Activated B cell treated with CpG ODN at 0.5 μM for 24 hours (primary cell): ENCODE measurements at regions of chr5 and their contacts with region 1.

Region 1: DNA sequence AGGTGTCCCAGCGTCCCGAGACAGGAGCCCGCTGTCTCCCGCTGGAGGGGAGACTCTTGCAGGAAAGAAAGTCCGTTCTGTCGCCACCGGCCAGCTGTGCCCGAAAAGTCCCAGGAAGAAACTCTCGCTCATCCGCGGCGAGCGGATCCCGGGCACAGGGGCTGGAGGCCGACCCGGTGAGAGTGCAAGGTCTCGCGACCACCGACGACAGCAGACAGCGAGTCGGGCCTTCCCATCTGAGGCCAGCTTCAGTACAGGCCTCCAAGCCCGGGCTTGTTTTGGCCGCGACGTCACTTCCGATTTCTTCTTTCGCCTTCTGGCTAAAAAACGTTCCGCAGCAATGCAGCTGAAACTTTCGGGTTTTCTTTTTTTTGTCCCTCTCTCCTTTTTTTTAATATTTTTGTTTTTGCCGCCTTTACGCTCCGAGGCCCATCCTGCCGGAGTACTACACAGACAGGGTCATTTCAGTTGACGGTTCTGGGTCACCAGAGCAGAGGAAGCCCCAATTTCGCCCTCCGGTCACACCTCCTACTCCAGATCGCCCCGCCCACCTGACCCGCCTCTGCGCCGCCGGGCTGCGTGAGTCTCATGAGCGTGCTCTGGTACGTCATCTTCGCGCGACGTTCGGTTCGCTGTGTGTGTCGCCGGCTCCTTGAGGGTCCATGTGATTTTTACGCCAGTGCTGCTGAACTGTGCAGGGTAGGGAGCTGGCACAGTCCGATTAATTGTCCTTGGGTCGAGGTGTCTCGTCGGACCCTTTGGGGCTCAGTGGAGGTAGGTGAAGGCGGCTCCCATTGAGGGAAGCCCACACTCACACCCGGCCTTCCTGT is at the starts of genes ANKRA2 and UTP15:
- DNase-seq: peak; percentile 98
- ATAC-seq: peak; percentile 96
- H3K4me3 Mint-ChIP-seq: peak within 1 kb of the TSS; percentile 99
- H3K27ac Mint-ChIP-seq: peak within 1 kb of the TSS; percentile 100
- H3K4me1 Mint-ChIP-seq: peaks cover 37% of the 10 kb centered on the region
- H3K27me3 Mint-ChIP-seq: no peaks in the 10 kb centered on the region
- CTCF ChIP-seq: no peak
- total RNA-seq, gene ANKRA2: 17.7 and 22.9 TPM in 2 replicates
- total RNA-seq, gene UTP15: 35.7 and 40.4 TPM in 2 replicates

Region 2: GRCh38 chr5:71586941-71587765 is 1978.2 kb before region 1 on chr5 and contains the start of gene MCCC2:
- CTCF ChIA-PET with region 1: no interaction called
- POLR2A ChIA-PET with region 1: no interaction called
- intact Hi-C with region 1: loop called (anchors 10 kb)
- DNase-seq: peak; percentile 93
- ATAC-seq: peak; percentile 98
- H3K4me3 Mint-ChIP-seq: peak within 1 kb of the TSS; percentile 97
- H3K27ac Mint-ChIP-seq: peak within 1 kb of the TSS; percentile 99
- H3K4me1 Mint-ChIP-seq: peaks cover 43% of the 10 kb centered on the region
- H3K27me3 Mint-ChIP-seq: no peaks in the 10 kb centered on the region
- CTCF ChIP-seq: no peak
- total RNA-seq, gene MCCC2: 68.5 and 70.4 TPM in 2 replicates

Region 3: GRCh38 chr5:72816311-72817145 is 748.8 kb before region 1 on chr5 and contains the start of gene TNPO1:
- CTCF ChIA-PET with region 1: no interaction called
- POLR2A ChIA-PET with region 1: no interaction called
- intact Hi-C with region 1: loop called (anchors 2 kb)
- DNase-seq: peak; percentile 94
- ATAC-seq: peak; percentile 79
- H3K4me3 Mint-ChIP-seq: peak within 1 kb of the TSS; percentile 95
- H3K27ac Mint-ChIP-seq: peak within 1 kb of the TSS; percentile 97
- H3K4me1 Mint-ChIP-seq: peaks cover 25% of the 10 kb centered on the region
- H3K27me3 Mint-ChIP-seq: peaks cover 5% of the 10 kb centered on the region
- CTCF ChIP-seq: no peak
- total RNA-seq, gene TNPO1: 89.6 and 109 TPM in 2 replicates

Region 4: DNA sequence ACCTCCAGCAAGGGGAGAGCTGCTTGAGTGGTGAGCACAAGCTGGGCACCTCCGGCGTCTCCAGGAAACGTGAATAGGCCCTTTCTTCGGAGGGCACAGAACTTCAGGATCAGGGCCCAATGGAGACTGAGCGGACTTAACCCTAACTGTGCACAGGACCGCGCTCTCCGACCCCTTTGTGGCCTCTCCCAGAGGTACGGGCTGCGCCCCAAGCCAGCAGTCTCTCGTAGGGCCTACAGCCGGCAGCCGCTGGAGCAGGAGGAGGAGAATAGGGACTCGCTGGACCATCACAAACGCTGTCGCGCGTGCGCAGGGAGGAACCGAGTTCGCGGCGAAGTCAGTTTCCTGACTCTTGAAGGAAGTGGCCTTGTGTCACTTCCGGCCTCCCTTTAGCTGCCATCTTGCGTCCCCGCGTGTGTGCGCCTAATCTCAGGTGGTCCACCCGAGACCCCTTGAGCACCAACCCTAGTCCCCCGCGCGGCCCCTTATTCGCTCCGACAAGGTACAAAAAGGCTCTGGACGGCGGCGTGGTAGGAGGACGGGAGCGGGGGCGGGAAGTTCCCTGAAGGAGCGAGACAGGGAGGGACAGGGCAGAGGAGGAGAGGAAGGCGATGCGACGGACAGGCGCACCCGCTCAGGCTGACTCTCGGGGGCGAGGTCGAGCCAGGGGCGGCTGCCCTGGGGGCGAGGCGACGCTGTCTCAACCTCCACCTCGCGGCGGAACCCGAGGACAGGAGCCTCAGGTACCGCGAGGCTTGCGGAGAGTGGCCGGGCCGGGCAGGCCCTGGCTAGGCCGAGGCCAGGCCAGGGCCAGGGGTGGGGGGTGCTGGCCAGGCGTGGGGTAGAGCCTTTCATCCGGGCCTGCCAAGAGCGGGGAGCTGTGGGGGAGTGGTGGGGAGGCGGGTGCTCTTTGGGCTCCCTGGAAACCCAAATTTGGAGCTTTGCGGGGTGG is 67.0 kb before region 1 on chr5 and contains the start of gene BTF3:
- CTCF ChIA-PET with region 1: no interaction called
- POLR2A ChIA-PET with region 1: interaction called, 35 read pairs
- intact Hi-C with region 1: loop called (anchors 1 kb)
- DNase-seq: peak; percentile 88
- ATAC-seq: peak; percentile 96
- H3K4me3 Mint-ChIP-seq: peak within 1 kb of the TSS; percentile 97
- H3K27ac Mint-ChIP-seq: peak within 1 kb of the TSS; percentile 97
- H3K4me1 Mint-ChIP-seq: peaks cover 33% of the 10 kb centered on the region
- H3K27me3 Mint-ChIP-seq: peaks cover 4% of the 10 kb centered on the region
- CTCF ChIP-seq: no peak
- total RNA-seq, gene BTF3: 753 and 798 TPM in 2 replicates

Region 5: DNA sequence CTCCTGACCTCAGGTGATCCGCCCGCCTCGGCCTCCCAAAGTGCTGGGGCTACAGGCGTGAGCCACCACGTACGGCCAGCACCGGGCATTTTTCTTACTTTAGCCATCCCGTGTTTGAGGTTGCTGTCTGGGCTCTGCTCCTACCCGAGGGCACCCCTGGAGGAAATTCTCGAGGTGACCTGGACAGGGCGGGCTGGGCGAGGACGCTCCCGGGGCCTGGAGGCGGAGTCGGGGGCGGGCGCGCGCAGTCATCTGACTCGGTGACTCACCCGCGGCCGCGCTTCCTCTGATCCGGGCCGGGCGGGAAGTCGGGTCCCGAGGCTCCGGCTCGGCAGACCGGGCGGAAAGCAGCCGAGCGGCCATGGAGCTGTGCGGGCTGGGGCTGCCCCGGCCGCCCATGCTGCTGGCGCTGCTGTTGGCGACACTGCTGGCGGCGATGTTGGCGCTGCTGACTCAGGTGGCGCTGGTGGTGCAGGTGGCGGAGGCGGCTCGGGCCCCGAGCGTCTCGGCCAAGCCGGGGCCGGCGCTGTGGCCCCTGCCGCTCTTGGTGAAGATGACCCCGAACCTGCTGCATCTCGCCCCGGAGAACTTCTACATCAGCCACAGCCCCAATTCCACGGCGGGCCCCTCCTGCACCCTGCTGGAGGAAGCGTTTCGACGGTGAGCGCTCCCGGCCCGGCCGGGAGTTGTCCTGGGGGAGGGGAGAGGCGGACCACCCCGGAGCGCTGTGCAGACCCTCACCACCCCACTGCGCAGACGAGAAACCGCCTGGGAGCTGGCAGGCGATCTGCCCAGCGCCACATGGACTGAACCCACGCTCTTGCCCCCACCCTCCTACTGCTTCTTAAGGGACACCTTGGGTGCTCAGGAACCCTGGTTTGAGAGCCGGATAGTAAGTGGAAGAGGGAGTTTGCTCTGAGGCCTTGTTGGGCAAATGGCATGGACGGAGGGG is 1119.8 kb after region 1 on chr5 and contains the start of gene HEXB:
- CTCF ChIA-PET with region 1: no interaction called
- POLR2A ChIA-PET with region 1: no interaction called
- intact Hi-C with region 1: loop called (anchors 5 kb)
- DNase-seq: peak; percentile 77
- ATAC-seq: peak; percentile 86
- H3K4me3 Mint-ChIP-seq: peak within 1 kb of the TSS; percentile 81
- H3K27ac Mint-ChIP-seq: peak within 1 kb of the TSS; percentile 63
- H3K4me1 Mint-ChIP-seq: peaks cover 18% of the 10 kb centered on the region
- H3K27me3 Mint-ChIP-seq: no peaks in the 10 kb centered on the region
- CTCF ChIP-seq: no peak
- total RNA-seq, gene HEXB: 34.5 and 43.2 TPM in 2 replicates

Region 6: GRCh38 chr5:75336625-75337339 is 1771.4 kb after region 1 on chr5 and contains the start of gene HMGCR:
- CTCF ChIA-PET with region 1: no interaction called
- POLR2A ChIA-PET with region 1: no interaction called
- intact Hi-C with region 1: loop called (anchors 5 kb)
- DNase-seq: peak; percentile 89
- ATAC-seq: peak; percentile 95
- H3K4me3 Mint-ChIP-seq: no peak within 1 kb of the TSS
- H3K27ac Mint-ChIP-seq: no peak within 1 kb of the TSS
- H3K4me1 Mint-ChIP-seq: peaks cover 30% of the 10 kb centered on the region
- H3K27me3 Mint-ChIP-seq: no peaks in the 10 kb centered on the region
- CTCF ChIP-seq: no peak
- total RNA-seq, gene HMGCR: 105 and 131 TPM in 2 replicates